Activated B cell treated with CpG ODN at 0.5 μM for 24 hours (primary cell): ENCODE measurements at regions of chr19 and their contacts with region 1.

Region 1: DNA sequence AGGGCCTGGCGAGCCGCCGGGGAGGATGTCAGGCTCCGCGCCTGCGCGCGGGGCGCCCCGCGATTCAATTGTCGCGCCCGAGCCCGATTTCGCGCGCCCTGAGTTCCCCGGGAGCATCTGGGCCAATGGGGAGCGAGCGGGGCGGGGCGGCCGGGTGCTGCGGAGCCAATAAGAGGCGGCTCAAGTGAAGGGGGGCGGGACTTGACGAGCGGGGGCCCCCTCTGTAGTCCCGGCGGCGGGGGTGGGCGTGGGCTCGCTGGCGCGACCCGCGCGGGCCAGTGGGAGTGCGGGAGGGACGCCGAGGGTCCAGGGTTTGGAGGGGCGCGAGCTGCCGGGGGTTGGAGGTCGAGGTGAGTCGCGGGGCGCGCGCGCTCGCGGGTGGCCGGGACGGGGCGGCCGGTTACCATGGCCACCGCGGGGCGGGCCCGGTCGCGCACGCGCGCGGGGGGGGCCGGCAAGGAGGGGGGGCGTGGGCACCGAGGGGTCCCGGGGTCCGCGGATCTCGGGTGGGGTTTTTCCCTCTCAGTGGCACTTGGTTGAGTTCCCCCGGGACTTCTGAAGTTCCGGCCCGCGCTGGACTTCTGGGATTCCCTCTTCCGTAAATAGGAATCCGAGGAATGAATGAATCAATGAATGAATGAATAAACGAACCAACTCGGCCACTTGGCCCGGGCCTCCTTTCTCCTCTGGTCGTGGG is 744 bp downstream of the UHRF1 start:
- DNase-seq: peak; percentile 94
- ATAC-seq: peak; percentile 96
- H3K4me3 Mint-ChIP-seq: peak overlapping the region; percentile 82
- H3K27ac Mint-ChIP-seq: peak overlapping the region; percentile 35
- H3K4me1 Mint-ChIP-seq: peaks cover 56% of the 10 kb centered on the region
- H3K27me3 Mint-ChIP-seq: no peaks in the 10 kb centered on the region
- CTCF ChIP-seq: no peak

Region 2: GRCh38 chr19:4328243-4328990 is 581.6 kb before region 1 on chr19:
- CTCF ChIA-PET with region 1: no interaction called
- POLR2A ChIA-PET with region 1: no interaction called
- intact Hi-C with region 1: no loop called
- DNase-seq: peak; percentile 81
- ATAC-seq: peak; percentile 90
- H3K4me3 Mint-ChIP-seq: peak overlapping the region; percentile 81
- H3K27ac Mint-ChIP-seq: peak overlapping the region; percentile 82
- H3K4me1 Mint-ChIP-seq: peaks cover 26% of the 10 kb centered on the region
- H3K27me3 Mint-ChIP-seq: no peaks in the 10 kb centered on the region
- CTCF ChIP-seq: no peak

Region 3: DNA sequence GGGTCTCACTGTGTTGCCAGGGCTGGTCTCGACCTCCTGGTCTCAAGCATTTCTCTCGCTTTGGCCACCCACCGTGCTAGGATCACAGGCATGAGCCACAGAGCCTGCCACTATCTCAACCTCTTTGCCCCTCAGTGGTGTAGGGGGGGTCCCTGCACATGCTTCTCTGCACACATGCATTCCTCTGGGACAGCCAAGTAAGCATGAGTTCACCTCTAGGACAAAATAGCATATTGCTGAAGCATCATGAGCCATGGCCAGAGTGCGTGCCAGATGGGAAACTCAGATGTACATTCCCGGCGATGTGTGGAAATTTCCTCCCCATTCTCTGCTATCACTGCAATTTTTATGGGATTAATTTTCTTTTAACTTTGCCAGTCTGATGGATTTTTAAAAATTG is 484.5 kb before region 1 on chr19:
- CTCF ChIA-PET with region 1: no interaction called
- POLR2A ChIA-PET with region 1: no interaction called
- intact Hi-C with region 1: no loop called
- DNase-seq: no peak
- ATAC-seq: no peak
- H3K4me3 Mint-ChIP-seq: no peak overlapping the region
- H3K27ac Mint-ChIP-seq: no peak overlapping the region
- H3K4me1 Mint-ChIP-seq: peaks cover 8% of the 10 kb centered on the region
- H3K27me3 Mint-ChIP-seq: no peaks in the 10 kb centered on the region
- CTCF ChIP-seq: no peak

Region 4: GRCh38 chr19:4732680-4733114 is 177.3 kb before region 1 on chr19:
- CTCF ChIA-PET with region 1: no interaction called
- POLR2A ChIA-PET with region 1: no interaction called
- intact Hi-C with region 1: loop called (anchors 2 kb)
- DNase-seq: peak; percentile 29
- ATAC-seq: peak; percentile 97
- H3K4me3 Mint-ChIP-seq: peak overlapping the region; percentile 36
- H3K27ac Mint-ChIP-seq: no peak overlapping the region
- H3K4me1 Mint-ChIP-seq: peaks cover 4% of the 10 kb centered on the region
- H3K27me3 Mint-ChIP-seq: peaks cover 3% of the 10 kb centered on the region
- CTCF ChIP-seq: no peak

Region 5: DNA sequence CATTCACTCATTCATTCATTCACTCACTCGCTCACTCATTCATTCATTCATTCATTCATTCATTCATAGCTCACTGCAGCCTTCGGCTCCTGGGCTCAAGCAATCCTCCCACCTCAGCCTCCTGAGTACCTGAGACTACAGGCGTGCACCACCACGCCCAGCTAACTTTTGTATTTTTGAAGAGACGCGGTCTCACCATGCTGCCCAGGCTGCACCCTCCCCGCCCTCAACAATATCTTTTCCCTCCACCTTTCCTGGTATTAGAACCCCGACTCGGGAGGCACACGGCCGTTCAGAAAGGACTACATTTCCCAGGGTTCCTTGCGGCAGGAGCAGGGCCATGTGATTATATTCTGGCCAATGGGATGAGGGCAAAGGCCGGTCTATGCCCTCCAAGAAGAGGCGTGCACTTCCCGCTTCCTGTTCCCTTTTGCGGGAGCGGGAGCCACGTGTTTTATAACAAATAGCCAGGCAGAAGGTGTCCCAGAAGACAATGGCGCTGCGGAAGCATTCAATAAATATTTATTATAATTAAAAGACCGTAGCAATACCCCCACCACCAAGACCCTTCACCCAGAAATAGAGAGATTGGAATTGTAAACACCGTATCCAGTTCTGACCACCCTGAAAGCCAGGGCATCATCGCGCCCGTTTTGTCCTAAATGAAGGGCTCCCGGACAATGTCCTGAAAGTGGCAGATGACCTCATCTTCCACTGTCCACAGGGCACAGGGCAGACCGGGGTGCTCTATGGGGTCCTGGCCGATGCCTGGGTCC is 94.4 kb before region 1 on chr19:
- CTCF ChIA-PET with region 1: interaction called, 111 read pairs
- POLR2A ChIA-PET with region 1: interaction called, 5 read pairs
- intact Hi-C with region 1: no loop called
- DNase-seq: peak; percentile 39
- ATAC-seq: peak; percentile 72
- H3K4me3 Mint-ChIP-seq: peak overlapping the region; percentile 70
- H3K27ac Mint-ChIP-seq: peak overlapping the region; percentile 72
- H3K4me1 Mint-ChIP-seq: peaks cover 34% of the 10 kb centered on the region
- H3K27me3 Mint-ChIP-seq: no peaks in the 10 kb centered on the region
- CTCF ChIP-seq: no peak

Region 6: GRCh38 chr19:4851551-4852290 is 58.3 kb before region 1 on chr19:
- CTCF ChIA-PET with region 1: interaction called, 23 read pairs
- POLR2A ChIA-PET with region 1: no interaction called
- intact Hi-C with region 1: no loop called
- DNase-seq: peak; percentile 77
- ATAC-seq: peak; percentile 94
- H3K4me3 Mint-ChIP-seq: no peak overlapping the region
- H3K27ac Mint-ChIP-seq: no peak overlapping the region
- H3K4me1 Mint-ChIP-seq: peaks cover 17% of the 10 kb centered on the region
- H3K27me3 Mint-ChIP-seq: no peaks in the 10 kb centered on the region
- CTCF ChIP-seq: peak; percentile 63

Region 7: DNA sequence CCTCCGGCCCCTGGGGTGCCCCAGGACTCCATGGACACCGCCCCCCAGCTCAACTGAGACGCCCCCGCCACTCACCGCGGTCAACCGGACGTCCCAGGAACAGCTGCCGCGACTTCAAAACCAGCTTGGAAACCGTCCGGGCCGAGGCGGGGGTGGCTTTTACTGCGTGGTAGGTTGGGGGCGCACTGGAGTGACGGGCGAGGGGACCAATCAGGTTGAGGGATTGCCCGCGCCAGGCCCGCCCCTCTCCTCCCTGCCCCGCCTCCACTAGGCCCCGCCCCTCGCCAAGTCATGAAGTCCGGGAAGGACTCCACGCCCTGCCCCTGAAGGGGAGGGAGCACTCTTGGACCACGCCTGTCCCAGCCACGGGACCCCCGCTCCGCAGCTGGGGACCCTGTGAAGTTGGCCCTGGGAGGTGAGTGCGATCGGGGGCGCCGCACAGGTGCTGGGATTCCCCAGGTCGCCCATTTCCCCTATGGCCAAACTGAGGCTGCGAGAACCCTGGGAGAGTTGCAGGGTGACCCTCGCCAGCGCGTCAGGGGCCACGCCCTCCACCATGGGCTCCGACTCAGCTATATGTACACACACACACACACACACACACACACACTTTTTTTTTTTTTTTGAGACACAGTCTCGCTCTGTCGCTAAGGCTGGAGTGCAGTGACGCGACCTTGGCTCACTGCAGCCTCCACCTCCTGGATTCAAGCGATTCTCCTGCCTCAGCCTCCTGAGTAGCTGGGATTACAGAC is 42.3 kb before region 1 on chr19 and contains the start of gene PLIN3:
- CTCF ChIA-PET with region 1: interaction called, 32 read pairs
- POLR2A ChIA-PET with region 1: interaction called, 13 read pairs
- intact Hi-C with region 1: loop called (anchors 1 kb)
- DNase-seq: peak; percentile 90
- ATAC-seq: peak; percentile 95
- H3K4me3 Mint-ChIP-seq: peak within 1 kb of the TSS; percentile 85
- H3K27ac Mint-ChIP-seq: peak within 1 kb of the TSS; percentile 69
- H3K4me1 Mint-ChIP-seq: peaks cover 30% of the 10 kb centered on the region
- H3K27me3 Mint-ChIP-seq: no peaks in the 10 kb centered on the region
- CTCF ChIP-seq: no peak
- total RNA-seq, gene PLIN3: 28.7 and 29.0 TPM in 2 replicates

Region 8: GRCh38 chr19:4968462-4969291 is 58.6 kb after region 1 on chr19 and contains the start of gene KDM4B:
- CTCF ChIA-PET with region 1: no interaction called
- POLR2A ChIA-PET with region 1: interaction called, 23 read pairs
- intact Hi-C with region 1: loop called (anchors 1 kb)
- DNase-seq: peak; percentile 99
- ATAC-seq: peak; percentile 89
- H3K4me3 Mint-ChIP-seq: peak within 1 kb of the TSS; percentile 88
- H3K27ac Mint-ChIP-seq: peak within 1 kb of the TSS; percentile 88
- H3K4me1 Mint-ChIP-seq: peaks cover 31% of the 10 kb centered on the region
- H3K27me3 Mint-ChIP-seq: no peaks in the 10 kb centered on the region
- CTCF ChIP-seq: no peak
- total RNA-seq, gene KDM4B: 76.4 and 88.9 TPM in 2 replicates

Region 9: DNA sequence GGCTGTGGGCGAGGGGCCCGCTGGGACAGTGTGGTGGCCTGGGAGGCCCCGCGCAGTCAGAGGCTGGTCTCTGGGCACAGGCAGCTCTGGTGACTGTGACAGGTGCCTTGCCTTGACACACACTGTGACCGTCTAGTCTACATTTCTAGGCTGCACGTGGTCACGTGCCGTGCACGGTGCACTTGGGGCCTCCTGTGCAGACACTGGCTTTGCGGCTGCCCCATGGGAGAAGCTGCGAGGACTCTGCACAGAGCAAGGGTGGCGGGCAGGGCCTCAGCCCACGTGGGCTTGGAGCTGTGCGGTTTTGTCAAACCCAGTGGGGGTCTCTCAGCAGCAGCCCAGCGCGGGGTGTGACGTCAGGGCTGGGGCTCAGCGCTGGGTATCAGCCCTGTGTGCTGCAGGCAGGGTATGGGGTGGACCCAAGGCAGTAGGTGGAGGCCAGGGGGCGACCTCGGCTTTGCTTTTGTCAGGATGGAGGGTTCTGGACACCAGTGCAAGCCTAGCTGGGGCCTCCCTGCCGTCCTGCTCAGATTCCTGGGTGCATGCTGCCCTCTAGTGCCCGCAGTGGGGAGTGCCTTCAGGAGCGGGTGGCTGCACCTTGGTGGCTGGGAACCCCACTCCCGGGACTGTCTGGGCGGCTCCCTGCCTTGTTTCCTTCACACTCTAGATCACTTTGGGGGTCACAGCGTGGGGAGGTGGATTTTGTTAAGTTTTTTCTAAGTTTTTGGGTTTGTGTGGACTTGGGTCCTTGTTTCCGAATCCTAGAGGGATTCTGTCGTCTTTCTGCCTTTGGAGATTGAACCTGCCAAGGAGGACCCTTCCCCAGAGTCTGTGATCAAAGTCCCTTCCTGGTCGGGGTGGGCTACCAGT is 121.4 kb after region 1 on chr19:
- CTCF ChIA-PET with region 1: interaction called, 19 read pairs
- POLR2A ChIA-PET with region 1: no interaction called
- intact Hi-C with region 1: loop called (anchors 2 kb)
- DNase-seq: peak; percentile 85
- ATAC-seq: peak; percentile 94
- H3K4me3 Mint-ChIP-seq: no peak overlapping the region
- H3K27ac Mint-ChIP-seq: no peak overlapping the region
- H3K4me1 Mint-ChIP-seq: peaks cover 17% of the 10 kb centered on the region
- H3K27me3 Mint-ChIP-seq: no peaks in the 10 kb centered on the region
- CTCF ChIP-seq: peak; percentile 33